ENCODE measurements at regions of chr7 and their contacts with region 1.

Region 1: DNA sequence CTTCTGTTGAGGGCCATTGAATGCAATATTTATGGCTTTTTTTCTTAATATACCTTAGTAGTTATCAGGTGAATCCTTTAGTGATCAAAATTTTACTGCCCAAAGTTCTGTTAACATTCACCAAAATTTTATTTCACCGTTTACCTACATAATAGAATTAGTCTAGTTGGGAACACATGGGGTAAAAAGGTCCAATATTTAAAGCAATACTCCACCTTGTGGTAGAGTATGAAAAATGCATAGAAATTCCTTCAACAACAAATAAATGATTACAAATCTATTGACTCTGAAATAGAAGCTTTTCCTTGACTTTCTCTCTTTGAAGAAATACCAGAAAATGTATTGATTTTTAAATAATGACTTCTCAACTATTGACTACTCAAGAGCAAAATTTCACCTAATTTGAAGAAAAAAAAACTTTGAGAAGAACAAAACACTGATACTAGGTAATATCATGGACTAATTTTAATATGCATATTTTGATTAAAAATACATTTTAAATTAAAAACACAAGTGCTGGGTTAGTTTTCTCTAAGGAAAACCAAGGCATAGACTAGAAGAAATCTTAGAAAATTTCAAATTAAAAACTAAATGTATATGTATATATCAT is 43.3 kb downstream of the POLR1F start:
- DNase-seq: peak in 3 of 14 experiments; percentile 13 to 28 (median 26)
- ATAC-seq: no peak
- H3K4me3 ChIP-seq: no peak overlapping the region
- H3K4me3 Mint-ChIP-seq: no peak overlapping the region
- H3K27ac ChIP-seq: no peak overlapping the region
- H3K27ac Mint-ChIP-seq: no peak overlapping the region
- H3K4me1 ChIP-seq: no peaks in the 10 kb centered on the region
- H3K4me1 Mint-ChIP-seq: peaks cover 11% of the 10 kb centered on the region
- H3K27me3 ChIP-seq: no peaks in the 10 kb centered on the region
- H3K27me3 Mint-ChIP-seq: no peaks in the 10 kb centered on the region
- CTCF ChIP-seq: peak; percentile 72

Region 2: GRCh38 chr7:17769918-17770317 is 1895.6 kb before region 1 on chr7:
- CTCF ChIA-PET with region 1: no interaction called
- POLR2A ChIA-PET with region 1: no interaction called
- intact Hi-C with region 1: loop called in 1 of 2 experiments (anchors 10 kb)
- DNase-seq: peak in 13 of 14 experiments; percentile 6 to 67 (median 23)
- ATAC-seq: no peak
- H3K4me3 ChIP-seq: no peak overlapping the region
- H3K4me3 Mint-ChIP-seq: no peak overlapping the region
- H3K27ac ChIP-seq: no peak overlapping the region
- H3K27ac Mint-ChIP-seq: no peak overlapping the region
- H3K4me1 ChIP-seq: no peaks in the 10 kb centered on the region
- H3K4me1 Mint-ChIP-seq: no peaks in the 10 kb centered on the region
- H3K27me3 ChIP-seq: no peaks in the 10 kb centered on the region
- H3K27me3 Mint-ChIP-seq: no peaks in the 10 kb centered on the region
- CTCF ChIP-seq: peak; percentile 67

Region 3: DNA sequence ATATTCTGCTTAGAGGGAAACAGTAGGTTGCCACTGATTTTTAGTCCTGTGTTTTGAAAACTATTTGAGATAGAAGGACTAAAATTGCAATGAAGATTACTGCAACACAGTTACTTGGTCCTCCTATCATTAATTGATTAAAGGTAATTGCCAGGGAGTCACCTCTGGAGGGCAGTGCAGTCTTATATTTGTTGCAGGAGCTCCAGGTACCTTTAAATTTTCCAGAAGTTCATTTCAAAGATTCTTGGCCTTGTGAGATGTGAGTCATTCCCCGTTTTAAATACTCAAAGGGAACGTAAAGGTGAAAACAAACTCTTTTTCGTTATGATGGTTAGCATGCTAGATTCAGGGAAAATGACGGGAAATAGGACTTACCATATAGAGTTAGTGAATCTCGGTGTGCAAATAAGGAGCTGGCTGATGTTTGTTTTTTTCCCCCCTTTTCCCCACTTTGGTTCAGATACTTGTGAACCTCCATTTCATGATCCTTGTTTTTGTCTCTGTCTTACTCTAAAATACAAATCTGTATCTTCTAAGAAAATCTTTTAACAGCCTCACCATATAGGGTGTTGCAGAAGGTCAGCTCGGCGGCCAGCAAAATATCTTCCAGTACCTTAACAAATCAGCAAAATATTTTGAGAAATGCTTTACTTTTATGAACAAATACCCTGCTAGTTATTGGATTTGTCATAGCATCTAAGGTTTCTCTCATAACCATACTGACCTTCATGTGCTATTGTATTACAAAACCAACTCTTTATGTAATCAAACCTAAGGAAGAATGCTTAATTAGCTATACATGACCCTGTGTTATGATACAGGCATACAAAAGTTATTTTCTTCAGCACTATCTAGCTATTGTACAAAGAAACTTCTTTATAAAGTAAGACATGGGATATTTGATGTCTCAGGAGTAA is 1312.9 kb before region 1 on chr7:
- CTCF ChIA-PET with region 1: no interaction called
- POLR2A ChIA-PET with region 1: no interaction called
- intact Hi-C with region 1: loop called (anchors 5 to 10 kb)
- DNase-seq: peak in 3 of 14 experiments; percentile 22 to 31 (median 25)
- ATAC-seq: no peak
- H3K4me3 ChIP-seq: no peak overlapping the region
- H3K4me3 Mint-ChIP-seq: no peak overlapping the region
- H3K27ac ChIP-seq: no peak overlapping the region
- H3K27ac Mint-ChIP-seq: no peak overlapping the region
- H3K4me1 ChIP-seq: no peaks in the 10 kb centered on the region
- H3K4me1 Mint-ChIP-seq: peaks cover 5% of the 10 kb centered on the region
- H3K27me3 ChIP-seq: no peaks in the 10 kb centered on the region
- H3K27me3 Mint-ChIP-seq: no peaks in the 10 kb centered on the region
- CTCF ChIP-seq: no peak